GM12878 (cell line): ENCODE measurements at regions of chr14 and their contacts with region 1.

Region 1: DNA sequence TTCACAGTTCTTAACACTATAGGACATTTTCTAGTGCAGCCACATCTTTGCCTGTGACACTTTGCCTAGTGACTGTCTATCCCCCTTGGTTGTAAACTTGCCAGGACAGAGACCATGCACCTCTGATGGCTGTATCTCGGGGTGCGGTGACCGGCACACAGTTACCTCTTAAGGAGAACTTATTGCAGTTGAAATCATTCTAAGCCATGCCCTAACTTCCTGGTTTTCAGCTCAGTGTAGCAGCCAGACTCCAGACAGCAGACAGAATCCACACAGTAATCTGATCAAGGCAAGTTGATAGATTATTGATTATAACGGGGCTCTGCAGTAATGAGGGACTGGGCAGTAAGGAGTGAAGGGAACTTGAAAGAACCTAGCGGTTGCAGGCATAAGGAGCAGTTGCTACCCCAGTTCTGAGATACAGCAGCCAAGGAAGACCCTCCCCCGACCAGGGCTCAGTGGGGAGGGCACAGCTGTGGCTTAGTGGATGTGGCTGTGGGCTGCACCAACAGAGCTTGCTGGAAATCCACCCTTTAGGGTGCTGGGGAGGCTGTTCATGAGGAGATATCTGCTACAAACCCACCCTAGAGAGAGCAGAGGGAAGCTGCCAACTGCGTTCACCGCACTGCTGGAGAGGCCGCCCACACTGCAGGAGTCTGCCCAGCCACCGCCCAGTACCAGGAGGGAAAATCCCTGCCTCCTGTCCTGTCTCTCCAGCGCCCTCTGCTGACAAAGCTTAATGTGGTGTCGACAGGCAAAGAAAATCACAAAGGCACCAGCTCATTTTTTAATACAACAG is 58.2 kb upstream of the BEGAIN start:
- DNase-seq: peak; percentile 11
- ATAC-seq: peak; percentile 97
- H3K4me3 ChIP-seq: no peak overlapping the region
- H3K27ac ChIP-seq: no peak overlapping the region
- H3K4me1 ChIP-seq: peaks cover 6% of the 10 kb centered on the region
- H3K27me3 ChIP-seq: no peaks in the 10 kb centered on the region
- CTCF ChIP-seq: peak; percentile 73 to 90 (median 82)
- EP300 ChIP-seq: no peak
- POLR2A ChIP-seq: no peak
- RAD21 ChIP-seq: peak; percentile 79

Region 2: GRCh38 chr14:100056964-100057795 is 588.2 kb before region 1 on chr14:
- CTCF ChIA-PET with region 1: no interaction called
- POLR2A ChIA-PET with region 1: no interaction called
- RAD21 ChIA-PET with region 1: no interaction called
- SMC1A ChIA-PET with region 1: no interaction called
- in situ Hi-C with region 1: no loop called
- intact Hi-C with region 1: no loop called
- DNase-seq: no peak
- ATAC-seq: peak; percentile 80
- H3K4me3 ChIP-seq: no peak overlapping the region
- H3K27ac ChIP-seq: peak overlapping the region; percentile 53
- H3K4me1 ChIP-seq: peaks cover 37% of the 10 kb centered on the region
- H3K27me3 ChIP-seq: no peaks in the 10 kb centered on the region
- CTCF ChIP-seq: peak; percentile 53 to 76 (median 61)
- EP300 ChIP-seq: no peak
- POLR2A ChIP-seq: no peak
- RAD21 ChIP-seq: peak; percentile 85

Region 3: GRCh38 chr14:100306420-100307219 is 338.8 kb before region 1 on chr14 and contains the start of gene SLC25A29:
- CTCF ChIA-PET with region 1: interaction called, 7 read pairs
- POLR2A ChIA-PET with region 1: interaction called, 5 read pairs
- RAD21 ChIA-PET with region 1: no interaction called
- SMC1A ChIA-PET with region 1: no interaction called
- in situ Hi-C with region 1: no loop called
- intact Hi-C with region 1: loop called (anchors 5 kb)
- DNase-seq: no peak
- ATAC-seq: peak; percentile 96
- H3K4me3 ChIP-seq: peak within 1 kb of the TSS; percentile 85
- H3K27ac ChIP-seq: no peak within 1 kb of the TSS
- H3K4me1 ChIP-seq: no peaks in the 10 kb centered on the region
- H3K27me3 ChIP-seq: peaks cover 0 to 7% of the 10 kb centered on the region in 2 experiments; a peak in 1 of 4 replicates
- CTCF ChIP-seq: no peak
- EP300 ChIP-seq: no peak
- POLR2A ChIP-seq: peak; percentile 76
- RAD21 ChIP-seq: no peak
- polyA plus RNA-seq, gene SLC25A29: 0.42 TPM in 1 of 2 experiments, not detected in the other

Region 4: DNA sequence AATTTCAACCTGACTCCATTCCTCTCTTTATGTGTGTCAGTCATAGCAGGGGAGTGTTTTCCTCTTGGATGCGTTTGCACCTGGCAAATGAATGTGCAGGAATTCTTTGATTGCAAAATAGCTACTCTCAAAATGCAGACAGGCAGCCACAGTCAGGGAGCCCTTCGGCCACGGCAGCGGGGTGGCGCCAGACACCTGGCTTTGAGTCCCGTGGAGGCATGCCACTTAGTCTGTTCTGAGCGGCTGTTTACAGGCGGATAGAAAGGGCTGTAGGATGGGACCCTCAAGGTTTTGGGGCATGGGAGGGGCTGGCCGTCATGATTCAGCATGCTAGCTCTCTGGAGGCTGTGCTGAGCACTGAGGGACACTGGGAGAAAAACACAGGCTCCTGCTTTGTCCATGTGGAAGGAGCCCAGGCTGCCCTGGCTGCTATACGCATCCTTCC is 205.2 kb before region 1 on chr14:
- CTCF ChIA-PET with region 1: interaction called, 67 read pairs
- POLR2A ChIA-PET with region 1: no interaction called
- RAD21 ChIA-PET with region 1: interaction called, 36 read pairs
- SMC1A ChIA-PET with region 1: interaction called, 13 read pairs
- in situ Hi-C with region 1: no loop called
- intact Hi-C with region 1: loop called (anchors 2 kb)
- DNase-seq: no peak
- ATAC-seq: peak; percentile 78
- H3K4me3 ChIP-seq: no peak overlapping the region
- H3K27ac ChIP-seq: no peak overlapping the region
- H3K4me1 ChIP-seq: peaks cover under 1% of the 10 kb centered on the region; the same call in 1 of the 2 replicates
- H3K27me3 ChIP-seq: no peaks in the 10 kb centered on the region
- CTCF ChIP-seq: peak; percentile 43 to 71 (median 51); a peak in 5 of 6 replicates
- EP300 ChIP-seq: no peak
- POLR2A ChIP-seq: no peak
- RAD21 ChIP-seq: peak; percentile 83

Region 5: GRCh38 chr14:100533656-100534485 is 111.5 kb before region 1 on chr14:
- CTCF ChIA-PET with region 1: interaction called, 10 read pairs
- POLR2A ChIA-PET with region 1: no interaction called
- RAD21 ChIA-PET with region 1: no interaction called
- SMC1A ChIA-PET with region 1: no interaction called
- in situ Hi-C with region 1: no loop called
- intact Hi-C with region 1: no loop called
- DNase-seq: no peak
- ATAC-seq: no peak
- H3K4me3 ChIP-seq: no peak overlapping the region
- H3K27ac ChIP-seq: no peak overlapping the region
- H3K4me1 ChIP-seq: no peaks in the 10 kb centered on the region
- H3K27me3 ChIP-seq: no peaks in the 10 kb centered on the region
- CTCF ChIP-seq: no peak
- EP300 ChIP-seq: no peak
- POLR2A ChIP-seq: no peak
- RAD21 ChIP-seq: no peak

Region 6: DNA sequence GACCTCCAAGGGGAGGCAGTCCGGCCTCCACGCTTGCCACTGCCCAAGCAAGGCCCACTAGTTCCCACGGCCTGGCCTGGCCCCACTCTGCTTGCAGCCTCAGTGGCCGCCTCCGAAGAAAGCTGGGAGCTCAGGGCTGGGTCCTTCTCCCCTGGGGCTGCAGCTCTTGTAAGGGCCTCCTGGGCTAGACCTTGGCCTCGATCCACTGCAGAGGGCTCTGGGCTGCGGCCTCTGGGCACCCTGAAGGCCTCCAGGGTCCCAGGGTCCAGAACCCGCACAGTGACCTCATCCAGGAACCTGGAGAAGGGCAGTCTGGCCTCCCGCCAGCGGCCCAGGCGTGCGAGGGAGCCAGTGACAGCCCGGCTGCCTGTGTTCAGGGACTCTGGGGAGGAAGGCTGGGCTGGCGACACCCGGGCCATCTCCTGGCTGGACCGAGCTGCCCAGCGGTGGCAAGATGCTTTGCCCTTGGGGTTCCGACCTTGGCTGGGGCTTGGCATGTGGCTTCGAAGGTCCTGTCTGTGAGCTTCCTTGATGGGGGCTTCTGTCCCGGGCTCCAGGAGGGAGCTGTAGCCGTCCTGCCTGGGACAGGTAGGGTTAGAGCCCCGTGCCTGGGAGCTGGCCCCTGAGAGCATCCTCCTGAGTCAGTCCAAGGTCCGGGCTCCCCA is 67.9 kb before region 1 on chr14:
- CTCF ChIA-PET with region 1: no interaction called
- POLR2A ChIA-PET with region 1: no interaction called
- RAD21 ChIA-PET with region 1: no interaction called
- SMC1A ChIA-PET with region 1: no interaction called
- in situ Hi-C with region 1: no loop called
- intact Hi-C with region 1: no loop called
- DNase-seq: no peak
- ATAC-seq: no peak
- H3K4me3 ChIP-seq: no peak overlapping the region
- H3K27ac ChIP-seq: no peak overlapping the region
- H3K4me1 ChIP-seq: no peaks in the 10 kb centered on the region
- H3K27me3 ChIP-seq: no peaks in the 10 kb centered on the region
- CTCF ChIP-seq: no peak
- EP300 ChIP-seq: no peak
- POLR2A ChIP-seq: no peak
- RAD21 ChIP-seq: no peak